OCI-LY7 (cell line): ENCODE measurements at regions of chr9 and their contacts with region 1.

Region 1: GRCh38 chr9:123251741-123252140 is 16.6 kb downstream of the STRBP start:
- DNase-seq: no peak
- H3K4me3 ChIP-seq: no peak overlapping the region
- H3K27ac ChIP-seq: no peak overlapping the region
- H3K4me1 ChIP-seq: peaks cover 31% of the 10 kb centered on the region
- CTCF ChIP-seq: no peak

Region 2: GRCh38 chr9:123262338-123262737 is 10.6 kb after region 1 on chr9:
- CTCF ChIA-PET with region 1: interaction called, 4 read pairs
- POLR2A ChIA-PET with region 1: interaction called, 19 read pairs
- intact Hi-C with region 1: no loop called
- DNase-seq: no peak
- H3K4me3 ChIP-seq: no peak overlapping the region
- H3K27ac ChIP-seq: no peak overlapping the region
- H3K4me1 ChIP-seq: peaks cover 75% of the 10 kb centered on the region
- CTCF ChIP-seq: no peak